Common myeloid progenitor, CD34-positive (primary cell): ENCODE measurements at regions of chr12 and their contacts with region 1.

Region 1: GRCh38 chr12:6423267-6424007 is 21.3 kb upstream of the CD27 start:
- DNase-seq: peak; percentile 91 to 96 (median 95)
- H3K4me3 ChIP-seq: no peak overlapping the region
- H3K27ac ChIP-seq: no peak overlapping the region
- H3K4me1 ChIP-seq: peaks cover 0 to 39% (median 33%) of the 10 kb centered on the region in 4 experiments
- H3K27me3 ChIP-seq: no peaks in the 10 kb centered on the region

Region 2: GRCh38 chr12:6335451-6336078 is 87.9 kb before region 1 on chr12:
- CTCF ChIA-PET with region 1: interaction called, 19 read pairs
- POLR2A ChIA-PET with region 1: no interaction called
- DNase-seq: peak; percentile 87 to 96 (median 94)
- H3K4me3 ChIP-seq: peak overlapping the region in 6 of 7 experiments; percentile 65 to 99 (median 98)
- H3K27ac ChIP-seq: peak overlapping the region; percentile 74 to 96
- H3K4me1 ChIP-seq: peaks cover 30 to 81% (median 78%) of the 10 kb centered on the region in 4 experiments
- H3K27me3 ChIP-seq: no peaks in the 10 kb centered on the region

Region 3: GRCh38 chr12:6434205-6435140 is 11.0 kb after region 1 on chr12:
- CTCF ChIA-PET with region 1: interaction called, 17 read pairs
- POLR2A ChIA-PET with region 1: no interaction called
- DNase-seq: no peak
- H3K4me3 ChIP-seq: no peak overlapping the region
- H3K27ac ChIP-seq: no peak overlapping the region
- H3K4me1 ChIP-seq: peaks cover 8 to 28% (median 18%) of the 10 kb centered on the region in 4 experiments
- H3K27me3 ChIP-seq: no peaks in the 10 kb centered on the region

Region 4: DNA sequence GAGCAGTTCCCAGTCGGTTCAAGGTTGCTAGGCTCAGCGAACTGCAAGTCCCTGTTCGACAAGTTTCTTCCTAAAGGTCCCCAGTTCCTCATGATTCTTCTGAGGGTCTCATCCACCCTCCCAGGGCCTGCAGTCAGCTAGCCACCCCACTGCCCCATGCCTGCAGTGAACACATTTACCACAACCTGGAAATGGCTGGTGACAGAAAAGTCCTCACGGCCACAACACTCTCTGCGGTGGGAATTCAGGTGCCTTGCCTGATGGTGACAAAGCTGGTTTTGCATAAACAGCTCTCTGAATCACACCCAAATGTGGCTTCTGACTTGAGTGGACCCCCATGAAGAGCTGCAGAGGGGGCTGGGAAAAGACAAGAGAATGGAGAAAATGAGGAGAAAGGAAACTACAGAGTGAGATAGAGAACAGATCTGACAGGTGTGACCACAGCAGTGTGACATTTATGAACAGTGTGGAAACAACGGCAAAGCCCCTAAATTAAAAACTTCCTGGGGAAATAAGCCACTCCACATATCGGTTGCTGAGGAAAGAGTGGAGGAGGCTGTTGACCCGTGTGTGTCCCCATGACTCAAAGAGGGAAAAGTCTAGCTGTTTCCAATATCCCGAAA is 20.0 kb after region 1 on chr12:
- CTCF ChIA-PET with region 1: interaction called, 15 read pairs
- POLR2A ChIA-PET with region 1: no interaction called
- DNase-seq: peak in 2 of 3 donors; percentile 81 to 87
- H3K4me3 ChIP-seq: peak overlapping the region in 1 of 7 experiments; percentile 20
- H3K27ac ChIP-seq: no peak overlapping the region
- H3K4me1 ChIP-seq: peaks cover 12 to 45% (median 39%) of the 10 kb centered on the region in 4 experiments
- H3K27me3 ChIP-seq: peaks cover 0 to 1% (median 0%) of the 10 kb centered on the region in 5 experiments

Region 5: GRCh38 chr12:6451348-6452244 is 28.2 kb after region 1 on chr12 and contains the start of gene TAPBPL:
- CTCF ChIA-PET with region 1: interaction called, 197 read pairs
- POLR2A ChIA-PET with region 1: no interaction called
- DNase-seq: peak; percentile 78 to 92 (median 89)
- H3K4me3 ChIP-seq: peak within 1 kb of the TSS; percentile 64 to 98 (median 93)
- H3K27ac ChIP-seq: peak within 1 kb of the TSS; percentile 84 to 95
- H3K4me1 ChIP-seq: peaks cover 5 to 31% (median 28%) of the 10 kb centered on the region in 4 experiments
- H3K27me3 ChIP-seq: no peaks in the 10 kb centered on the region

Region 6: GRCh38 chr12:6533923-6534694 is 110.7 kb after region 1 on chr12 and contains the start of gene GAPDH:
- CTCF ChIA-PET with region 1: interaction called, 53 read pairs
- POLR2A ChIA-PET with region 1: no interaction called
- DNase-seq: peak; percentile 93 to 97 (median 95)
- H3K4me3 ChIP-seq: peak within 1 kb of the TSS; percentile 83 to 96 (median 89)
- H3K27ac ChIP-seq: peak within 1 kb of the TSS; percentile 89 to 94
- H3K4me1 ChIP-seq: peaks cover 5 to 54% (median 52%) of the 10 kb centered on the region in 4 experiments
- H3K27me3 ChIP-seq: no peaks in the 10 kb centered on the region